HEK293 (cell line): ENCODE measurements at regions of chr16 and their contacts with region 1.

Region 1: DNA sequence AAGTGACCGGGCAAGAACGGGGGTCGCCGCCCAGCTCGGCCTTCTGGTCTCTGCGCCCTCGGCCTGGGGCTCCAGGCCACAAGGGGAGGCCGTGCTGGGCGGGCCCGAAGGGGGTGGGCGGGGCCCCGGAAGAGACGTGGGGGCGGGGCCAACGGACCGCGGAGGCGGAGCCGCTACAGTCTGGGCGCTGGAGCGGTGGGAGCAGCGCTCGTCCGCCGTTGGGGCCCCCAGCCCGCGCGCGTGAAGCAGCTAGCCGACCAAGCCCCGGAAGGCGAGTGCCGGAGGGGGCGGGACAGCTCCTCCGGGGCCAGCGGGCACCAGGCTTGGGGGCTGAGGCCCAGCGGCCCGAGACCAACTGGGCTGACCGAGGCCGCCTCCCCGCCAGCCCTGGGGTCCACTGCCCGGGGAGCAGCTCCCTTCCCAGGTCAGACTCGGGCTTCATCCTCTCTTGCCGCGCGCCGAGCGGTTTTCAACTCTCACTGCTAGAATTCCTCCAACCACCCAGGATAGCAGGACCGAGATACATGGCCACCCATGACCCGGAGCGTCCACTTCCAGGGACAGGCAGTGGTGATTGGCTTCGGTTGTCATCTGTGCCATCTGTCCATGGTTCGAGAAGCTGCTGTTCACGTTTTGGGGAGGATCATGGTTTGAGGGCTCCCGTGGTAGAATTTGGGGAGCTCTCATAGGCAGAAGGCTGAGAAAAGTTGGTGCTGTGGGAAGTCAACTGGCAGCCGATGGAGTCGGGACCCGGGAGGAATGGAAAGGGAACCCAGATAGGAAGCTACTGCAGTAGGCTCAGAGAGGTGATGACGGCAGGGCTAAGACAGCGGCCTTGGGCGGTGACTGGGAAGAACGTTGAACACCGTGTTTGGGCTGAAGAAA is 44.6 kb upstream of the LCMT1 start:
- H3K4me3 ChIP-seq: peak overlapping the region; percentile 65
- H3K27ac ChIP-seq: peak overlapping the region; percentile 25; the same call in 1 of the 2 replicates
- H3K4me1 ChIP-seq: no peaks in the 10 kb centered on the region
- CTCF ChIP-seq: no peak

Region 2: GRCh38 chr16:24939234-24939633 is 127.8 kb before region 1 on chr16:
- CTCF ChIA-PET with region 1: no interaction called
- POLR2A ChIA-PET with region 1: no interaction called
- H3K4me3 ChIP-seq: no peak overlapping the region
- H3K27ac ChIP-seq: no peak overlapping the region
- H3K4me1 ChIP-seq: no peaks in the 10 kb centered on the region
- CTCF ChIP-seq: no peak

Region 3: GRCh38 chr16:25111403-25112166 is 44.6 kb after region 1 on chr16 and contains the start of gene LCMT1:
- CTCF ChIA-PET with region 1: interaction called, 4 read pairs
- POLR2A ChIA-PET with region 1: interaction called, 12 read pairs
- H3K4me3 ChIP-seq: peak within 1 kb of the TSS; percentile 92
- H3K27ac ChIP-seq: peak within 1 kb of the TSS; percentile 61
- H3K4me1 ChIP-seq: 0 out of 2 replicates have a peak, but pooled peaks cover 4% of the 10 kb centered on the region
- CTCF ChIP-seq: peak; percentile 52; the same call in 1 of the 2 replicates